Activated CD8-positive, alpha-beta memory T cell treated with anti-CD3 and anti-CD28 coated beads, Interleukin-2, amount 10 ng/mL, durations not matched to agents 7 days and 5 days (primary cell): ENCODE measurements at regions of chr6 and their contacts with region 1.

Region 1: GRCh38 chr6:131532580-131533039 is 40.4 kb upstream of the ARG1 start:
- DNase-seq: peak; percentile 55
- ATAC-seq: peak; percentile 70
- H3K4me3 Mint-ChIP-seq: no peak overlapping the region
- H3K27ac Mint-ChIP-seq: no peak overlapping the region
- H3K4me1 Mint-ChIP-seq: peaks cover 32% of the 10 kb centered on the region
- H3K27me3 Mint-ChIP-seq: peaks cover 6% of the 10 kb centered on the region

Region 2: DNA sequence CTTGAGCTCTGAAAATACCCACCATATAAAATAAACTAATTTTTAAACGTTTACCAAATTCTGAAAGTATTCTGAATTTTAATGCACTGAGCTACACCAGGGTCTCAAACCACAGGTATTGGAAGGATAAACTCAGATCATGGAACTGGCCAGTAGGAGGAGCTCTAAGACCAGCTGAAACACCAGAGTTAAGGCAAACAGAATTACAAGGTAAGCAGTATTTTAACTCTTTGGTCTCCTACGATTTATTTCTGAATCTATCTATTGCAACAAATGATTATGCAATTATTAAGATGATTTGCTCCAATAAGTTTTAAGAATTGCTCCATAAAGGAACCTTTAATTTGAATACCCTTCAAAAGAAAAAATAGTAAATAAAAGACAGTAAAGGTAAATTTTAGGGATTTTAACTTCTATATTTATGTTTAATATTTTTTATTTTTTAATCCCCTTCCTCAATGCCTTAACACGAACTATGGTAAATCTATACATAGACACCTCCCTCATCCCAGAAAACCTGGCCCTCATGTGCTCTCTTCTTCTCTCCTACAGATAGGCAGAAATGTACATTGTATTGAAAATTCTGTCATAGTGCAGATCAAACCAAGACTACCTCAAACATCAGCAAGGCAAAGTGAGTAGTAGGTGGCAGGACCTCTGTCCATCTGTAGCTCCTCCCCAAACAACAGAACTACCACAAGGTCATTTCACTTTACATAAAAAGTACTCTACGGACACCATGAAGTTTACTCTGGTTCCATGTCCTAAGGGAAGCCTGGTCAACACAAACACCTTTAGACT is 647.0 kb before region 1 on chr6:
- CTCF ChIA-PET with region 1: interaction called, 35 read pairs
- DNase-seq: peak; percentile 79
- ATAC-seq: peak; percentile 78
- H3K4me3 Mint-ChIP-seq: no peak overlapping the region
- H3K27ac Mint-ChIP-seq: no peak overlapping the region
- H3K4me1 Mint-ChIP-seq: no peaks in the 10 kb centered on the region
- H3K27me3 Mint-ChIP-seq: no peaks in the 10 kb centered on the region

Region 3: DNA sequence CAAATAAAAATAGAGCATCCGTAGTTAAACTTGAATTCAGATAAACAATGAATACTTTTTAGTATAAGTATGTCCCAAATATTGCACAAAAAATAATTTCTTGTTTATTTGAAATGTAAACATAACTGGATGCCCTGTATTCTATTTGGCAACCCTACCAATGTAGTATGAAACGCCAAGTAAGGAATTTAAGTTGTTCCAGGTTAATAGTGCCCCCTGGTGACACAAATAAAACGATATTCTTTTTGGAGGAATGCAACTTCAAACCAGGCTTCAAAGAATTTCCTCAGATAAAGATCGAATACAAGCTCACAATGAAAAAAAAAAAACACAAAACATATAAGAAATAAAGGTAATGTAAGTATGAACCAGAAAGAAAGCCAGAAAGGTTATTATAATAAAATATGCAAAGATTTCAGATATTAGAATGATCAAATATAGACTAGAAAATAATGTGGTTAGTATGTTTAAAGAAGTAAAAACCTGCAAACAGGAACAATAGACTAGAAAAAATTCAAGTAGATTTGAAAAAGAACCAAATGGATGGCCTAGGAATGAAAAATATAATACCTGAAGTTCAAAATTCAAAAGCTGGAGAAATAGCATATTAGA is 415.8 kb before region 1 on chr6:
- CTCF ChIA-PET with region 1: interaction called, 11 read pairs
- DNase-seq: no peak
- ATAC-seq: no peak
- H3K4me3 Mint-ChIP-seq: no peak overlapping the region
- H3K27ac Mint-ChIP-seq: no peak overlapping the region
- H3K4me1 Mint-ChIP-seq: no peaks in the 10 kb centered on the region
- H3K27me3 Mint-ChIP-seq: peaks cover 4% of the 10 kb centered on the region

Region 4: DNA sequence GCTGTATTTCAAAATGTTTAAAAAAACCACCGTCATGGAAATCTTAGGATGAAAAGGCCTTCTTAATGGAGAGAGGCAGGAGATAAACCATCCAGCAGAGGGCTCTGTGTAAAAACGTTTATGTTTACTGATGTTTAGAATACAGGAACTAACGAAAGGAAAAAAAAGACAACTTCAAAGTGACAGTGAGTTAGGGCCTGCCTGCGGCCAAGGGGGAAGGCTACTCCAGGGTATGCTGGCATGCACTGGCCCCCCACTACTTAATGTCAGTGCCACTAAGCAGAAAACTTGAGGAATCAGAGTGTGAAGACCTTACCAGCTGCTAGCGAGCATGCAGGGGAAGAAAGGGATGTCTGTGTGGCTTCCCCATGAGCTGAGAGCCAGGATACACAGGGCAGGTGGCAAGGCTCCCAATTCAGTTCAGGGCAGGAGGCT is 349.6 kb before region 1 on chr6:
- CTCF ChIA-PET with region 1: interaction called, 33 read pairs
- DNase-seq: peak; percentile 54
- ATAC-seq: peak; percentile 92
- H3K4me3 Mint-ChIP-seq: peak overlapping the region; percentile 43
- H3K27ac Mint-ChIP-seq: peak overlapping the region; percentile 97
- H3K4me1 Mint-ChIP-seq: peaks cover 9% of the 10 kb centered on the region
- H3K27me3 Mint-ChIP-seq: no peaks in the 10 kb centered on the region

Region 5: GRCh38 chr6:131199568-131200272 is 332.9 kb before region 1 on chr6:
- CTCF ChIA-PET with region 1: interaction called, 41 read pairs
- DNase-seq: peak; percentile 89
- ATAC-seq: peak; percentile 95
- H3K4me3 Mint-ChIP-seq: peak overlapping the region; percentile 77
- H3K27ac Mint-ChIP-seq: peak overlapping the region; percentile 96
- H3K4me1 Mint-ChIP-seq: peaks cover 58% of the 10 kb centered on the region
- H3K27me3 Mint-ChIP-seq: no peaks in the 10 kb centered on the region

Region 6: GRCh38 chr6:131519670-131520436 is 12.8 kb before region 1 on chr6:
- CTCF ChIA-PET with region 1: interaction called, 34 read pairs
- DNase-seq: peak; percentile 67
- ATAC-seq: peak; percentile 94
- H3K4me3 Mint-ChIP-seq: no peak overlapping the region
- H3K27ac Mint-ChIP-seq: no peak overlapping the region
- H3K4me1 Mint-ChIP-seq: peaks cover 12% of the 10 kb centered on the region
- H3K27me3 Mint-ChIP-seq: no peaks in the 10 kb centered on the region

Region 7: DNA sequence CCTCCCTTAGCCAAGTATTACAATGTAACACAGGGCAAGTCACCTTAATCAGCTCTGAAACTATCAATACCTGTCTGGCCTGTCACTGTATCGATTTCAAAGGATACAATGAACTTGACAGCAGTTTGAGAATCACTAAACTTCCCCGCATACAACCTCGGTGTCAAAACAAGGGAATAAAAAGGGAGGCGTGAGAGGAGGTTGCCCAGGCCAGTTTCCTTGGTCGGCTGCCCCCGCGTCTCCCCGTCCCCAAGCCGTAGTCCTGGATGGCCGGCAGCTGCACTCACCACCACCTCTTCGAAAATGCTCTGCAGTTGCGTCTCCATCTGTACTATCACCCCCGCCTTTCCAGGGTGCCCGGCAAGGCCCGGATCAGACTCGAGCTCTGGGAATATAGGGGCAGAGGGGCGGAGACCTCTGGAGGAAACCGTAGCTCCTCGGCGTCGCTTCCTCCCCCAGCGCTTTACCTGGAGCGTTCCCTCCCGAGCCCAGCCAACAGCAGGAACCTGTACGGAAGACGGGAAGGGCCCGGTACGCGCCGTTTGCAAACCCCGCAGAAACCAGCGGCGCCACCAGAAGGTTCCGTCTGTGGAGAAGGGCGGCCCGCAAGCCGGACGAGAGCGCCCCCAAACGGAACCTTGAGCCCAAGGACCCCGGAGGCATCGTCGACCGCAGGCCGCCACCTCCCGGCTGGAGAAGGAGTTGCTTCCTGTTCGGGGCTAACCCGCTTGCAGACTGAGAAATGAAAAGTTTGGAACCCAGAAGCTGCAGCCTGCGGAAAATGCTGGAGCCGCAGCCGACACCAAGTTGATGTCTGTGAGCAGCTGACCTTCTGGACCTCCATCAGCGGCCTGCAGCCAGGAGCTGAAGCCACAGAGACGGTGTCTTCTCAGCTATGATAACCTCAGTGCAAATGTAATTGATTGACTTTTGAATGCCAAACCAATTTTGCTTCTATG is 95.4 kb after region 1 on chr6 and contains the start of gene MED23:
- CTCF ChIA-PET with region 1: interaction called, 13 read pairs
- DNase-seq: peak; percentile 94
- ATAC-seq: peak; percentile 91
- H3K4me3 Mint-ChIP-seq: peak within 1 kb of the TSS; percentile 84
- H3K27ac Mint-ChIP-seq: peak within 1 kb of the TSS; percentile 92
- H3K4me1 Mint-ChIP-seq: peaks cover 21% of the 10 kb centered on the region
- H3K27me3 Mint-ChIP-seq: no peaks in the 10 kb centered on the region
- total RNA-seq, gene MED23: 28.4 to 33.1 TPM